Activated CD8-positive, alpha-beta T cell treated with anti-CD3 and anti-CD28 coated beads, Interleukin-2, amount 10 ng/mL, durations not matched to agents 7 days and 5 days (primary cell): ENCODE measurements at regions of chr7 and their contacts with region 1.

Region 1: GRCh38 chr7:97179454-97180104 is 62.1 kb downstream of the SDHAF3 start:
- DNase-seq: peak; percentile 60
- ATAC-seq: no peak
- H3K4me3 Mint-ChIP-seq: no peak overlapping the region
- H3K27ac Mint-ChIP-seq: no peak overlapping the region
- H3K4me1 Mint-ChIP-seq: no peaks in the 10 kb centered on the region
- H3K27me3 Mint-ChIP-seq: no peaks in the 10 kb centered on the region

Region 2: GRCh38 chr7:97075928-97076327 is 103.7 kb before region 1 on chr7:
- CTCF ChIA-PET with region 1: no interaction called
- POLR2A ChIA-PET with region 1: no interaction called
- DNase-seq: no peak
- ATAC-seq: no peak
- H3K4me3 Mint-ChIP-seq: no peak overlapping the region
- H3K27ac Mint-ChIP-seq: no peak overlapping the region
- H3K4me1 Mint-ChIP-seq: no peaks in the 10 kb centered on the region
- H3K27me3 Mint-ChIP-seq: peaks cover 16% of the 10 kb centered on the region

Region 3: GRCh38 chr7:97117372-97118188 is 62.0 kb before region 1 on chr7 and contains the start of gene SDHAF3:
- CTCF ChIA-PET with region 1: interaction called, 10 read pairs
- POLR2A ChIA-PET with region 1: interaction called, 3 read pairs
- DNase-seq: peak; percentile 99
- ATAC-seq: peak; percentile 96
- H3K4me3 Mint-ChIP-seq: peak within 1 kb of the TSS; percentile 91
- H3K27ac Mint-ChIP-seq: peak within 1 kb of the TSS; percentile 97
- H3K4me1 Mint-ChIP-seq: peaks cover 33% of the 10 kb centered on the region
- H3K27me3 Mint-ChIP-seq: no peaks in the 10 kb centered on the region
- total RNA-seq, gene SDHAF3: 21.0 to 24.2 TPM

Region 4: GRCh38 chr7:97246317-97246716 is 66.7 kb after region 1 on chr7:
- CTCF ChIA-PET with region 1: no interaction called
- POLR2A ChIA-PET with region 1: no interaction called
- DNase-seq: no peak
- ATAC-seq: no peak
- H3K4me3 Mint-ChIP-seq: no peak overlapping the region
- H3K27ac Mint-ChIP-seq: no peak overlapping the region
- H3K4me1 Mint-ChIP-seq: no peaks in the 10 kb centered on the region
- H3K27me3 Mint-ChIP-seq: peaks cover 1% of the 10 kb centered on the region